ENCODE measurements at regions of chr2 and their contacts with region 1.

Region 1: DNA sequence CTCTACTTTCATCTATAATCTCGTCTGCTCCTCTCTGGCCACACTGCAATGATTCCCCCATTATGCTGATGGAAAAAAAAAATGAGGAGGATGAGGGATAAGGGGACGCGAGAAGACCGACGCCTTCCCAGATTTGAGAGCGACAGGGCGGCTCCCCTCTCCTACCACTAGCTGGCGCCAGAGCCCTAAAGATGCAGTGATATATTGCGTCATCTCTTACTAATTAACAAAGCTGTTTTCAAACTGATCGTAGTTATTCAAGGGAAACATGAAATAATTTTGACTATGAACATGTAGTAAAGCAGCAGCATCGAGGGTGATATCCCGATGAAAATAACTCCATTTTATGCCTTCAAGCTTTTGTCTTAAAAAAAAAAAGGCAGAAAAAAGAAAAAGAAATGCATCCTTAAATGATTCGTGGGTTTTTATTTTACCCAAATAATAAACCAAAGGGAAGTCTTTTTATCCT is 48.0 kb upstream of the HNRNPA3 start:
- DNase-seq: peak; percentile 86
- ATAC-seq: peak; percentile 78
- H3K4me3 Mint-ChIP-seq: no peak overlapping the region
- H3K27ac Mint-ChIP-seq: no peak overlapping the region
- H3K4me1 Mint-ChIP-seq: peaks cover 37% of the 10 kb centered on the region
- H3K27me3 Mint-ChIP-seq: peaks cover 4% of the 10 kb centered on the region

Region 2: DNA sequence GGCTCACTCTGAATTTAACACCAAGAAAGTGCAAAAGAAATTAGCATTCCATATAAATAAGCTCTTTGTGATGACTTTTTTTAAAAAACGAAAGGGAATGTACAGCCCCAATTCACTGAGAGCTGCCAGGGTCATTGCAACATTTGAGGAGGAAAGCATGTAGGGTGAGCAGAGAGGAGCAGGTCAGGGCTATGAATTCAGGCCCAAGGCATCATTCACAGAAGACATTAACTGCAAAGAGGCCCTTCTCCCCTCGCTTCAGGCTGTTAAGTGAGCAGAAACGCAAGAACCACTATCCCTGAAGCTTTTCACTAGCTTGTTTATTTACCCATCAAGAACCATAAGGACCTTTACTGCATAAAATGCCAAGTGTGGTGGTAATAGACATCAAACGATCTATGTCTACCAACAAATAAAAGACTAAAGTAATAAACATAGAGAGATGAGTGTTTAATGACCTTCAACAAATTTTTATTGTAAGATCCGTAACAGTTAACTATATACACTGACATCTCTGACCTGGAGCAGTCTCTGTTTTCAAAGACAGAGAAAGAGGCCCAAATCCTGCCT is 285.1 kb before region 1 on chr2:
- CTCF ChIA-PET with region 1: no interaction called
- DNase-seq: no peak
- ATAC-seq: no peak
- H3K4me3 Mint-ChIP-seq: no peak overlapping the region
- H3K27ac Mint-ChIP-seq: no peak overlapping the region
- H3K4me1 Mint-ChIP-seq: peaks cover 26% of the 10 kb centered on the region
- H3K27me3 Mint-ChIP-seq: no peaks in the 10 kb centered on the region

Region 3: GRCh38 chr2:177195194-177195593 is 30.6 kb after region 1 on chr2:
- CTCF ChIA-PET with region 1: interaction called, 12 read pairs
- DNase-seq: no peak
- ATAC-seq: no peak
- H3K4me3 Mint-ChIP-seq: no peak overlapping the region
- H3K27ac Mint-ChIP-seq: no peak overlapping the region
- H3K4me1 Mint-ChIP-seq: peaks cover 11% of the 10 kb centered on the region
- H3K27me3 Mint-ChIP-seq: no peaks in the 10 kb centered on the region

Region 4: DNA sequence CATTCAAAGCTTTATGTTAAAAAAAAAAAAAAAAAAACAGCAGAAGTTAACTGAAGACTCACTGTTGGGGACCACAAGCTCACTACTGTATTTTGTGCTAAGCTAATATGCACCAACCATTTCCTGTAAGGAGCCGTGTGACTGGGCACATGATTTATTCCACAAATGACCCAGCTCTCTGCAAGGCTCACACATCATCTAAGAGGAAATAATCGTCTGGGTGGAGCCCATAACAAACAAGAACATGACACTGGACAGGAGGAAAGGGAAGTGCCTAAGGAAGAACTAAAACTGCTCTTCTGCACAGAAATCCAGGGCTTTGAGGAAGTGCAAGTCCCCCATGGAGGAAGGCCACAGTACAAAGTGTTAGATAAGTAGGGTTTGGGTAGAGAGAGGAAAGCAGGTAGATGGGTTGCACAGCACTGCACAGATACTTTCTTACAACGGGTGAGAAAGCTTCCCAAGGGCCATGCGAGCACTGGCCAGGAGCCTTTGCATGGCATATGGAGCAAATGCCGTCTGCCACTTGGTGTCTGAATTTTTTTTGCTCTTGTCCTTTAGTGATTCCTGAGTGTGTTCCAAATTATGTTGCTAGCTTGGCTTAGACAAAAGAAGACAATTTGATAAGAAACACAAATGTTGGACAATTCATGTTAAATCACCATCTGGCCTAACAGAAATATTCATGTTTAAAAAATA is 75.5 kb after region 1 on chr2:
- CTCF ChIA-PET with region 1: interaction called, 16 read pairs
- DNase-seq: peak; percentile 77
- ATAC-seq: peak; percentile 95
- H3K4me3 Mint-ChIP-seq: peak overlapping the region; percentile 34
- H3K27ac Mint-ChIP-seq: peak overlapping the region; percentile 88
- H3K4me1 Mint-ChIP-seq: peaks cover 65% of the 10 kb centered on the region
- H3K27me3 Mint-ChIP-seq: no peaks in the 10 kb centered on the region

Region 5: GRCh38 chr2:177296040-177296439 is 131.4 kb after region 1 on chr2:
- CTCF ChIA-PET with region 1: interaction called, 78 read pairs
- DNase-seq: no peak
- ATAC-seq: peak; percentile 63
- H3K4me3 Mint-ChIP-seq: no peak overlapping the region
- H3K27ac Mint-ChIP-seq: peak overlapping the region; percentile 39
- H3K4me1 Mint-ChIP-seq: peaks cover 36% of the 10 kb centered on the region
- H3K27me3 Mint-ChIP-seq: no peaks in the 10 kb centered on the region

Region 6: GRCh38 chr2:177392373-177393202 is 228.0 kb after region 1 on chr2 and contains the start of gene AGPS:
- CTCF ChIA-PET with region 1: interaction called, 16 read pairs
- DNase-seq: peak; percentile 88
- ATAC-seq: peak; percentile 97
- H3K4me3 Mint-ChIP-seq: peak within 1 kb of the TSS; percentile 92
- H3K27ac Mint-ChIP-seq: peak within 1 kb of the TSS; percentile 88
- H3K4me1 Mint-ChIP-seq: peaks cover 51% of the 10 kb centered on the region
- H3K27me3 Mint-ChIP-seq: no peaks in the 10 kb centered on the region
- total RNA-seq, gene AGPS: 58.5 to 60.9 TPM

Region 7: GRCh38 chr2:177724398-177725287 is 560.0 kb after region 1 on chr2:
- CTCF ChIA-PET with region 1: interaction called, 14 read pairs
- DNase-seq: peak; percentile 67
- ATAC-seq: peak; percentile 68
- H3K4me3 Mint-ChIP-seq: no peak overlapping the region
- H3K27ac Mint-ChIP-seq: no peak overlapping the region
- H3K4me1 Mint-ChIP-seq: no peaks in the 10 kb centered on the region
- H3K27me3 Mint-ChIP-seq: peaks cover 52% of the 10 kb centered on the region

Measured in activated CD8-positive, alpha-beta memory T cell treated with anti-CD3 and anti-CD28 coated beads, Interleukin-2, amount 10 ng/mL, durations not matched to agents 7 days and 5 days (primary cell).